Activated B cell treated with CpG ODN at 0.5 μM for 24 hours (primary cell): ENCODE measurements at regions of chr11 and their contacts with region 1.

Region 1: DNA sequence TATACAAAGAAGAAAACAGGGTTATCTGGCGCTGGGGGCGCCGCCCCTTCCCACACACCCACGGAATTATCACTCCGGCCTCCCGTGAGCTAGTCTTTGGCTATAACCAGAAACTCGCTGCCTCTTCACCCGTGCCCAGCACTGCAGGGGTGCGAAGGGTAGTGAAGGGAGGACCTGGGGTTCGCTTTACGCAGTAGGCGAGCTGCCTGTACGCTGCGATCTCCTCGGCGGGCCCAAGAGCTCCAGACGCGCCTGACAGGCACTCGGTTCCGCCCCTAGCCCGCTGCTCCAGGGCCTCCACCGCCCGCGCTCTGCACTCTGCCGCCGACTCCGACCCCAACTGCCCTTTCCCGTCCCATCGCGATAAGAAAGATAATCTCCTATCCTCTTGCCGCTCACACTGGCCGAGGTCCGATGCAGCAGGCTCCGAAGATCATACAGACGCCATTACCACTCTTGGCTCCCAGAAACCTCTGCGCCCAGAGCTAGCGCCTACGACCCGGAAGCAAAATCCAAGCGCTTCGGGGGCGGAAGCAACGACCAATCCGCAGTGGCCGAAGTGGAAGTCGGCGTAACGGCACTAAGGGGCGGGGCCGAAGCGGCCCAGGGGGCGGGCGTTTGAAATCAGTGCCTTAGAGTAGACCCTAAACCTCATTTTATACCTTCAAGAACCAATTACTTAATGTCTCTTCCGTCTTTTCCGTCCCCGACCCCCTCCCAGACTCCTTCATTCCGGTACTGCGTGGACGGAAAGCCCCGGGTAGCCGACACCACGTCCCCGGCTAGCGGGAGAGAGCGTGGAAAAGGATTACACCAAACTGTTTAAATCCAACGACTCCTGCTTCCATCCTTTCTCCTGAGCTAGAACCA is at the starts of genes CWC15 and KDM4D:
- DNase-seq: peak; percentile 87
- ATAC-seq: peak; percentile 100
- H3K4me3 Mint-ChIP-seq: peak within 1 kb of the TSS; percentile 99
- H3K27ac Mint-ChIP-seq: peak within 1 kb of the TSS; percentile 95
- H3K4me1 Mint-ChIP-seq: peaks cover 20% of the 10 kb centered on the region
- H3K27me3 Mint-ChIP-seq: no peaks in the 10 kb centered on the region
- CTCF ChIP-seq: no peak
- total RNA-seq, gene CWC15: 69.1 and 69.2 TPM in 2 replicates
- total RNA-seq, gene KDM4D: 0.67 and 0.93 TPM in 2 replicates

Region 2: GRCh38 chr11:93197380-93198214 is 1775.7 kb before region 1 on chr11 and contains the start of gene SLC36A4:
- CTCF ChIA-PET with region 1: no interaction called
- POLR2A ChIA-PET with region 1: no interaction called
- intact Hi-C with region 1: loop called (anchors 5 kb)
- DNase-seq: peak; percentile 85
- ATAC-seq: peak; percentile 86
- H3K4me3 Mint-ChIP-seq: peak within 1 kb of the TSS; percentile 91
- H3K27ac Mint-ChIP-seq: peak within 1 kb of the TSS; percentile 93
- H3K4me1 Mint-ChIP-seq: peaks cover 15% of the 10 kb centered on the region
- H3K27me3 Mint-ChIP-seq: no peaks in the 10 kb centered on the region
- CTCF ChIP-seq: no peak
- total RNA-seq, gene SLC36A4: 14.9 and 17.0 TPM in 2 replicates

Region 3: DNA sequence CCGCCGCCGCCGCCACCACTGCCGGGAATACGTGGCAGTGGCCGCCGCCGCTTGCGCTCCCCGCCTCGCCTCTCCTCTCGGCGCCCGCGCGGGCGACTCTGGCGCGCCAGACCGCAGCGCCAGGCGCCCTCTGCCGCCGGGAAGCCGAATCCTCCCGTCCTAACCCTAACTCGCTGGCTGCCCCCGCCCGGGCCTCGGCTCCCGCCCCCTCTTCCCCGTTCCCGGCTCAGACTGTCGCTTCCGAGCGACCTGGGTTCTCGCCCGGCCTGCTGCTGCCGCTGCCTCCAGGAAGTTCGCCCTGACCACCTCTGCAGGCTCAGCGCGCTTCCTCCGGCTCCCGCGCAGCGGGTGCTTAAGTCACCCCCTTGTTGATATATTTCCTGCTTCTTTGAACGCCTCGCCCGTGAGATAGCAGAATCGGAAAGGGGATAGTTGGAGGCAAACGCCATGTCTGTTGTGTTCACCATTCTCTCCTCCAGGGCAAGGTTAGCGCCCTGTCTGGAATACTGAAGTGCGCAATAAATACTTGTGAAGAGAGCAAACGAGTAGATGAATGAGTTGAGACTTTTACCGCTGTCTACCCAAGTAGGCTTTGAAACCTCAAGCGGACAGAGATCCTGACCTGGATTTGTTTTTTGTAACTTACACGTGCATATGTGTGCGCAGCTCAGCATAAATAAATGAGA is 1429.9 kb before region 1 on chr11 and contains the start of gene SMCO4:
- CTCF ChIA-PET with region 1: no interaction called
- POLR2A ChIA-PET with region 1: no interaction called
- intact Hi-C with region 1: loop called (anchors 5 kb)
- DNase-seq: peak; percentile 62
- ATAC-seq: peak; percentile 77
- H3K4me3 Mint-ChIP-seq: peak within 1 kb of the TSS; percentile 90
- H3K27ac Mint-ChIP-seq: peak within 1 kb of the TSS; percentile 56
- H3K4me1 Mint-ChIP-seq: peaks cover 13% of the 10 kb centered on the region
- H3K27me3 Mint-ChIP-seq: peaks cover 4% of the 10 kb centered on the region
- CTCF ChIP-seq: no peak
- total RNA-seq, gene SMCO4: 3.2 and 4.6 TPM in 2 replicates

Region 4: GRCh38 chr11:94060405-94060804 is 912.9 kb before region 1 on chr11:
- CTCF ChIA-PET with region 1: no interaction called
- POLR2A ChIA-PET with region 1: no interaction called
- intact Hi-C with region 1: no loop called
- DNase-seq: no peak
- ATAC-seq: no peak
- H3K4me3 Mint-ChIP-seq: no peak overlapping the region
- H3K27ac Mint-ChIP-seq: no peak overlapping the region
- H3K4me1 Mint-ChIP-seq: no peaks in the 10 kb centered on the region
- H3K27me3 Mint-ChIP-seq: peaks cover 2% of the 10 kb centered on the region
- CTCF ChIP-seq: no peak

Region 5: DNA sequence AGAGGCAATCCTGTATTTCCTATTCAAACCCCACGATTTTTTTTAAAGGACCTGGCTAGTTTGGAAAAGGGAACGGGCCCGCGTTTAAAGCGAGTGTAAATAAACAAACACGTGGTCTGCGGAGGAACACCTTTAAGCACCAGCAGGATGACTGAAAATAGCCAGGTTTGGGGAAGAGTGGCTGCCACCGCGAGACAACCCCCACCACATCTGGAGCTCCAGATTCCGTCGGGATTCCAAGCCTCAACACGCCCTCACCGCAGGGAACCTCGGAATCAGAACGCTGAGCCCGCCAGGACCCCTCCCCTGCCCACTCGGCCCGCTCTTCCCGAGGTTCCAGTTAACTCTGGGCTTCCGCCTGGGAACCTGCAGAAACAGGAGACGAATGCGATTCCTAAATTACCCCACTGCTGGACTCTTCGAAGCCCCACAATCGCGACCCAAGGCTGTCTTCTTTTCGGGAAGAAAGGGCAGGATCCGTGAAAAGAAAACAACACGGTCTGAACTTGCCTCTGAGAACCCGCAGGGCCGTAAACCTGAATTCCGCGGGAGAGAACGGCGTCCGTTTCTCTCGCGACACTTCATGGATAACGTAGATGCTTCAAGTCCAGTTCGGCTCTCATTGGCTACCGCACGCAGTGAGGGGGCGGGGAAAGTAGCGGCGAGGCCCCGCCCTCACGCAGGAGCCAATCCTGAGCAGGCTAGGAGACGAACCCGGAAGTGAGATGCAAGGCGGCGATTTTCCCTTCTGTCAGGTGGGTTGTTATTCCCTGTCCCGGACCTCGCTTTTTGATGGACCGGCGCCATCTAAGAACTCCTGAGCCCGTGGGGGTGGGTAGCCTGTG is 479.8 kb before region 1 on chr11 and contains the starts of genes ANKRD49 and MRE11:
- CTCF ChIA-PET with region 1: no interaction called
- POLR2A ChIA-PET with region 1: interaction called, 3 read pairs
- intact Hi-C with region 1: loop called (anchors 5 kb)
- DNase-seq: peak; percentile 94
- ATAC-seq: peak; percentile 99
- H3K4me3 Mint-ChIP-seq: peak within 1 kb of the TSS; percentile 93
- H3K27ac Mint-ChIP-seq: peak within 1 kb of the TSS; percentile 92
- H3K4me1 Mint-ChIP-seq: peaks cover 39% of the 10 kb centered on the region
- H3K27me3 Mint-ChIP-seq: no peaks in the 10 kb centered on the region
- CTCF ChIP-seq: no peak
- total RNA-seq, gene ANKRD49: 39.5 and 46.5 TPM in 2 replicates
- total RNA-seq, gene MRE11: 39.7 and 40.1 TPM in 2 replicates

Region 6: GRCh38 chr11:94623120-94623735 is 350.1 kb before region 1 on chr11:
- CTCF ChIA-PET with region 1: no interaction called
- POLR2A ChIA-PET with region 1: no interaction called
- intact Hi-C with region 1: loop called (anchors 2 kb)
- DNase-seq: no peak
- ATAC-seq: peak; percentile 58
- H3K4me3 Mint-ChIP-seq: no peak overlapping the region
- H3K27ac Mint-ChIP-seq: no peak overlapping the region
- H3K4me1 Mint-ChIP-seq: no peaks in the 10 kb centered on the region
- H3K27me3 Mint-ChIP-seq: peaks cover 14% of the 10 kb centered on the region
- CTCF ChIP-seq: no peak

Region 7: DNA sequence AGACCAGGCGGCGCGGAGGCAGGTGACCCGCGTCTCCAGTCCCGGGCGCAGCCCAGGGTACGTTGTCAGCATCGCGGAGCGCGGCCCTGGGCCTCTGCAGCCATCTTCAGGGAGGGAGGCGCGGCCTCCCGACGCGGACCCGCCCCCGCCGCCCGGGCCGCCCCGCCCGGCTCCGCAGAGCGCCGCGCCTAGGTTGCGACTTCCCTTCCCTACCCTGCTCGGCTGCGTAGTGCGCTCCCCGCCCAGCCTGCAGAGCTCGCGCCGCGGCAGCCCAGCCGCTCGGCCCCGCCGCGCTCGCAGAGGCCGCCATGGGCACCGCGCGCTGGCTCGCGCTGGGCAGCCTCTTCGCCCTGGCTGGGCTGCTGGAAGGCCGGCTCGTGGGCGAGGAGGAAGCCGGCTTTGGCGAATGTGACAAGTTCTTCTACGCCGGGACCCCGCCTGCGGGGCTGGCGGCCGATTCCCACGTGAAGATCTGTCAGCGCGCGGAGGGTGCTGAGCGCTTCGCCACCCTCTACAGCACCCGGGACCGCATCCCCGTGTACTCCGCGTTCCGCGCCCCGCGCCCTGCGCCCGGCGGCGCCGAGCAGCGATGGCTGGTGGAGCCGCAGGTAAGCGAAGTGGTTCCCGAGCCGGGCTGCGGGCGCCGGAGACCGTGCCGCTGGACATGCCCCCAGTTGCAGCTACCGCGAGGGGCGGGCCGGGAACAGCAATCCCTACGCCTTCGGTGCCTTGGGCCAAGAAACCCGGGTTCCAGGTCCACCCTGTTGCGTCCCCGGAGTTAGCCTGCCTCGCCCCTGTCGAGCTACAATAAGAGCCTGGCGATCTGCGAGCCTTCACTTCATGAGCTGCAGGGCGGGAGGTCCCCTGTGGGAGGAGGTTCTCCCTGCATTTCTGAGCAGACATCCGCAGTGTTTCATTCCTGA is 116.5 kb after region 1 on chr11 and contains the start of gene ENDOD1:
- CTCF ChIA-PET with region 1: no interaction called
- POLR2A ChIA-PET with region 1: interaction called, 11 read pairs
- intact Hi-C with region 1: loop called (anchors 1 kb)
- DNase-seq: peak; percentile 88
- ATAC-seq: peak; percentile 93
- H3K4me3 Mint-ChIP-seq: peak within 1 kb of the TSS; percentile 92
- H3K27ac Mint-ChIP-seq: peak within 1 kb of the TSS; percentile 94
- H3K4me1 Mint-ChIP-seq: peaks cover 56% of the 10 kb centered on the region
- H3K27me3 Mint-ChIP-seq: no peaks in the 10 kb centered on the region
- CTCF ChIP-seq: no peak
- total RNA-seq, gene ENDOD1: 9.5 and 9.8 TPM in 2 replicates

Region 8: GRCh38 chr11:95138448-95138847 is 165.1 kb after region 1 on chr11:
- CTCF ChIA-PET with region 1: interaction called, 3 read pairs
- POLR2A ChIA-PET with region 1: interaction called, 5 read pairs
- intact Hi-C with region 1: loop called (anchors 2 kb)
- DNase-seq: no peak
- ATAC-seq: peak; percentile 84
- H3K4me3 Mint-ChIP-seq: no peak overlapping the region
- H3K27ac Mint-ChIP-seq: no peak overlapping the region
- H3K4me1 Mint-ChIP-seq: peaks cover 10% of the 10 kb centered on the region
- H3K27me3 Mint-ChIP-seq: no peaks in the 10 kb centered on the region
- CTCF ChIP-seq: no peak

Region 9: GRCh38 chr11:95157824-95158223 is 184.5 kb after region 1 on chr11:
- CTCF ChIA-PET with region 1: no interaction called
- POLR2A ChIA-PET with region 1: no interaction called
- intact Hi-C with region 1: no loop called
- DNase-seq: no peak
- ATAC-seq: no peak
- H3K4me3 Mint-ChIP-seq: no peak overlapping the region
- H3K27ac Mint-ChIP-seq: no peak overlapping the region
- H3K4me1 Mint-ChIP-seq: peaks cover 22% of the 10 kb centered on the region
- H3K27me3 Mint-ChIP-seq: no peaks in the 10 kb centered on the region
- CTCF ChIP-seq: no peak